Endothelial cell of umbilical vein (primary cell): ENCODE measurements at regions of chr21 and their contacts with region 1.

Region 1: GRCh38 chr21:33300701-33301631 is 23.8 kb upstream of the IFNAR1 start:
- DNase-seq: peak; percentile 66
- H3K4me3 ChIP-seq: no peak overlapping the region
- H3K27ac ChIP-seq: peak overlapping the region; percentile 70
- H3K4me1 ChIP-seq: peaks cover 26% of the 10 kb centered on the region
- H3K27me3 ChIP-seq: no peaks in the 10 kb centered on the region
- CTCF ChIP-seq: no peak
- POLR2A ChIP-seq: no peak

Region 2: GRCh38 chr21:33266050-33266788 is 34.7 kb before region 1 on chr21 and contains the start of gene IL10RB:
- CTCF ChIA-PET with region 1: no interaction called
- POLR2A ChIA-PET with region 1: no interaction called
- dilution Hi-C with region 1: no loop called
- intact Hi-C with region 1: loop called (anchors 1 kb)
- DNase-seq: peak; percentile 72
- H3K4me3 ChIP-seq: peak within 1 kb of the TSS; percentile 77 to 88 (median 84)
- H3K27ac ChIP-seq: peak within 1 kb of the TSS; percentile 54
- H3K4me1 ChIP-seq: peaks cover 10% of the 10 kb centered on the region
- H3K27me3 ChIP-seq: no peaks in the 10 kb centered on the region
- CTCF ChIP-seq: no peak
- POLR2A ChIP-seq: no peak
- total RNA-seq, gene IL10RB: 21.7 and 21.9 TPM in 2 replicates

Region 3: GRCh38 chr21:33324291-33325221 is 23.6 kb after region 1 on chr21 and contains the start of gene IFNAR1:
- CTCF ChIA-PET with region 1: no interaction called
- POLR2A ChIA-PET with region 1: no interaction called
- dilution Hi-C with region 1: no loop called
- intact Hi-C with region 1: loop called (anchors 1 kb)
- DNase-seq: peak; percentile 98
- H3K4me3 ChIP-seq: peak within 1 kb of the TSS; percentile 50 to 73 (median 65)
- H3K27ac ChIP-seq: peak within 1 kb of the TSS; percentile 46
- H3K4me1 ChIP-seq: peaks cover 11% of the 10 kb centered on the region
- H3K27me3 ChIP-seq: no peaks in the 10 kb centered on the region
- CTCF ChIP-seq: no peak
- POLR2A ChIP-seq: peak; percentile 93
- total RNA-seq, gene IFNAR1: 44.6 and 47.8 TPM in 2 replicates